Ovary (tissue), 10 donors: ENCODE measurements at regions of chr11 and their contacts with region 1.

Region 1: DNA sequence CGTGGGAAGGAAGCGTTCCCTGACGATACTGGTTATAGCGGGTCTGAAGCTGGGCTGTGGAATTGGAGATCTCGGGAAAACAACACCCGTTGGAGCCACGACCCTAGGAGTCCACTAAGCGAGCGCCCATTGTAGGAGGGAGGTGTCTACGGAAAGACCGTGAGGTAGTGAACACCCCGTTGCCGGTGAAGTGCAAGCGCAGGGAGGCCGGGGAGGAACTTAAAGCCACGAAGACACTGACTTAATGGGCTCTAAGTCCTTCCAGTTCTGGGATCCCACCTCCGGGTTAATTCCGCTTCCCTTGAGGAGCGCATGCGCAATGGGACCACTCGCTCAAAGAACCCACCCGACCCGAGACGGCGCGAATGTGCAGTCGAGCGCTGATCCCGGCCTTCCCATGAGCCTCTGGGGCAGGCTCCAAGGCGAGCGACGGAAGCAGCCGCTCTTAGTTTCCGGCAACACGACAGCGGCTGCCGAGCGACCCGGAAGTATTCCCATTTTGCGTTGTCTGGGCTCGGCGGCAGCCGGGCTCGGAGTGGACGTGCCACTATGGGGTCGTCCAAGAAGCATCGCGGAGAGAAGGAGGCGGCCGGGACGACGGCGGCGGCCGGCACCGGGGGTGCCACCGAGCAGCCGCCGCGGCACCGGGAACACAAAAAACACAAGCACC is at the start of gene SART1:
- DNase-seq: peak; percentile 96 to 98 (median 97)
- H3K4me3 ChIP-seq: peak within 1 kb of the TSS; percentile 99
- H3K27ac ChIP-seq: peak within 1 kb of the TSS; percentile 52 to 63
- H3K4me1 ChIP-seq: peaks cover 9% of the 10 kb centered on the region
- H3K27me3 ChIP-seq: no peaks in the 10 kb centered on the region
- CTCF ChIP-seq: peak in 1 of 3 donors; percentile 25
- EP300 ChIP-seq: no peak
- POLR2A ChIP-seq: peak; percentile 46
- total RNA-seq, gene SART1: 41.4 to 64.9 (median 57.0) TPM

Region 2: GRCh38 chr11:65919146-65920033 is 42.0 kb before region 1 on chr11 and contains the start of gene DRAP1:
- intact Hi-C with region 1: loop called in 2 of 4 experiments (anchors 5 kb)
- DNase-seq: peak; percentile 99
- H3K4me3 ChIP-seq: peak within 1 kb of the TSS; percentile 92
- H3K27ac ChIP-seq: peak within 1 kb of the TSS; percentile 79 to 84
- H3K4me1 ChIP-seq: peaks cover 37% of the 10 kb centered on the region
- H3K27me3 ChIP-seq: no peaks in the 10 kb centered on the region
- CTCF ChIP-seq: no peak
- EP300 ChIP-seq: no peak
- POLR2A ChIP-seq: peak; percentile 63
- total RNA-seq, gene DRAP1: 40.2 to 84.4 (median 78.3) TPM

Region 3: DNA sequence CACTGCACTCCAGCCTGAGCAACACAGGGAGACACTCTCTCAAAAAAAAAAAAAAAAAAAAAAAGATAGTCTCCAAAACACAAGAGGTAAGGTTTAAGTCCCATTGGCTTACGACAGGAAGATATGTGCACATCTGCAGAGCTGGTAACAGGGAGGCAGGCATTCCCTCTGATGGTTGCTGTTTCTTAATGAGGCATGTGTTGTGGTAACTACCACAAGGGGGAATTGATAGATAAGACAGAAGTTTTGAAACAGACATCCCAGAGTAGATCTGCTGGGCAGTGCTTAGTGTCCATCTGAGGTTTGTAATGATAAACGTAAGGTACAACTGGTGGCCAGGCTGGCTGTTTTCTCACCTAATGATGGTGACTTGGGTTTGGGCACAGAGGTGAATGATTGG is 35.9 kb after region 1 on chr11:
- intact Hi-C with region 1: loop called in 1 of 4 experiments (anchors 5 kb)
- DNase-seq: no peak
- H3K4me3 ChIP-seq: no peak overlapping the region
- H3K27ac ChIP-seq: no peak overlapping the region
- H3K4me1 ChIP-seq: no peaks in the 10 kb centered on the region
- H3K27me3 ChIP-seq: no peaks in the 10 kb centered on the region
- CTCF ChIP-seq: no peak
- EP300 ChIP-seq: no peak
- POLR2A ChIP-seq: no peak